ENCODE measurements at regions of chr11 and their contacts with region 1.

Region 1: DNA sequence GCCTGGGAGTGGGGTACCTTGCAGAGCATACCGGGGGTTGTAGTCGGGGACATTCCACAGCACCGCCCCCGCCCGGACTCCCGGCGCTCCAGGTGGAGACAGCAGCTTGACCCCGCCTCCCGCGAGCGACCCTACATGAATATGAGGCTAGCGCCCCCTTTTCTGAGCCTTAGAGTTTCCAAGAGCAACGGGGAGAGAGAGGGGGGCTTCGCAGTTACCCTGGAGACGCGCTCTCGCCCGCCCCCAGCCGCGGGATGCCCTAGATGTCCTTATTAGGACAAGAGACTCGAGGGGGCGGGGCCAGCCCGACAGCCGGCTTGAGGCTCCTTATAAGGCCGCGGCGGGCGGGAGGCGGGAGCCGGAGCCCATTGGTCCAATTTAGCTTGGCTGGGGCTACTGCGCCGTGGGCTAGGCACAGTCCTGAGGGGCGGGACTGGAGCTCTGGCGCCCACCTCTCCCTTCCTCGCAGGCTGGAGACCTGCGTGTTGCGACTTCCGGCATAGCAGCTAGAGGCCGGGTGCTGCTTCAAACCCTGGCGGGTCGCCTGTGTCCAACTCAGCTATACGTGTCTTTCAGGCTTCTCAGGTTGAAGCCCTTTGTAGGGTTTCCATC is 927 bp upstream of the MUS81 start:
- DNase-seq: peak; percentile 99 to 100
- H3K4me3 ChIP-seq: peak overlapping the region; percentile 84 to 99
- H3K27ac ChIP-seq: peak overlapping the region; percentile 94 to 99
- H3K4me1 ChIP-seq: peaks cover 21 to 27% of the 10 kb centered on the region in 2 donors
- H3K27me3 ChIP-seq: no peaks in the 10 kb centered on the region
- CTCF ChIP-seq: peak in 1 of 3 experiments; percentile 16

Region 2: GRCh38 chr11:65418711-65419459 is 440.4 kb before region 1 on chr11:
- intact Hi-C with region 1: loop called (anchors 5 kb)
- DNase-seq: peak; percentile 94 to 98
- H3K4me3 ChIP-seq: peak overlapping the region; percentile 56 to 80
- H3K27ac ChIP-seq: peak overlapping the region; percentile 97 to 99
- H3K4me1 ChIP-seq: peaks cover 32 to 46% of the 10 kb centered on the region in 2 donors
- H3K27me3 ChIP-seq: no peaks in the 10 kb centered on the region
- CTCF ChIP-seq: no peak

Region 3: GRCh38 chr11:65662799-65663638 is 196.3 kb before region 1 on chr11 and contains the start of gene RELA:
- intact Hi-C with region 1: loop called (anchors 1 kb)
- DNase-seq: peak; percentile 83 to 97
- H3K4me3 ChIP-seq: peak within 1 kb of the TSS; percentile 95 to 99
- H3K27ac ChIP-seq: peak within 1 kb of the TSS; percentile 98
- H3K4me1 ChIP-seq: peaks cover 11 to 32% of the 10 kb centered on the region in 2 donors
- H3K27me3 ChIP-seq: no peaks in the 10 kb centered on the region
- CTCF ChIP-seq: peak in 1 of 3 experiments; percentile 20
- total RNA-seq, gene RELA: 115 TPM

Region 4: DNA sequence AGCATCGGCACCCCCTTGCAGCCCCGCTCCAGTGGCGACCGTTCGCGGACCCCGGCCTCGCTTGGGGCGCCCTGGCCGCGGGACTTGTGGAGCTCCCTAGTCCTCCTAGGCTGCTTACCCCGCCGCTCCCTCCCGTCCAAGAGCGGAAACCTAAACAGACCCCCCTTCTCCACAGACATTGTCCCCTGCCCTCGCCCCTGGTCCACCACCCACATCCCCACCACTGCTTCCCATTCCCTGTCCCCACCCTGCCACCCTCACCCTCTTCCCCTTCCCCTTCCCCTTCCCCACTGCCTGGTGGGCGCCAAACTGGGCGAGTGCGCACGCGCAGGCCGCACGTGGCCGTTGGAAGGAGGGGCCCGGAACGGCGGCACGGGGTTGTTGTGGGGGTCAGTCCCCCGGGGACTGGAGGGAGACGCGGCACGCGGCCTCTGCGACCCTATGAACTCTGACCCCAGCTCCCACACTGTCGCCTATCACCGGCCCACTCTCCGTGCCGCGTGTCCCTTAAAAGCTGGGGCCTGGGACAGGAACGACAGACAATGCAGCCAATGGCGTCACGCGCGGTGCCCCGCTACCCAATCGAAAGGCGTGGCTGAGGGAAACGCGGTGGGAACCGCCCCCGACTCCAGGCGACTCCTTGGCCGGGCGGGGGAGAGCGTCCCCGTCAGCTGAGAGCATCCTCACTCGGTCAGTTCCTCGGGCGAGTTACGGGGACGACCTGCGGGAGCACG is 25.8 kb before region 1 on chr11 and contains the start of gene SNX32:
- intact Hi-C with region 1: loop called (anchors 2 kb)
- DNase-seq: peak; percentile 80 to 97
- H3K4me3 ChIP-seq: peak within 1 kb of the TSS; percentile 70 to 74
- H3K27ac ChIP-seq: no peak within 1 kb of the TSS
- H3K4me1 ChIP-seq: peaks cover 5 to 14% of the 10 kb centered on the region in 2 donors
- H3K27me3 ChIP-seq: no peaks in the 10 kb centered on the region
- CTCF ChIP-seq: no peak
- total RNA-seq, gene SNX32: not detected

Region 5: GRCh38 chr11:65888163-65888814 is 29.0 kb after region 1 on chr11 and contains the start of gene FIBP:
- intact Hi-C with region 1: loop called (anchors 1 kb)
- DNase-seq: peak; percentile 90 to 99
- H3K4me3 ChIP-seq: peak within 1 kb of the TSS; percentile 82 to 85
- H3K27ac ChIP-seq: peak within 1 kb of the TSS; percentile 98
- H3K4me1 ChIP-seq: peaks cover 20 to 28% of the 10 kb centered on the region in 2 donors
- H3K27me3 ChIP-seq: no peaks in the 10 kb centered on the region
- CTCF ChIP-seq: peak; percentile 84 to 98 (median 96)
- total RNA-seq, gene FIBP: 57.2 TPM

Region 6: DNA sequence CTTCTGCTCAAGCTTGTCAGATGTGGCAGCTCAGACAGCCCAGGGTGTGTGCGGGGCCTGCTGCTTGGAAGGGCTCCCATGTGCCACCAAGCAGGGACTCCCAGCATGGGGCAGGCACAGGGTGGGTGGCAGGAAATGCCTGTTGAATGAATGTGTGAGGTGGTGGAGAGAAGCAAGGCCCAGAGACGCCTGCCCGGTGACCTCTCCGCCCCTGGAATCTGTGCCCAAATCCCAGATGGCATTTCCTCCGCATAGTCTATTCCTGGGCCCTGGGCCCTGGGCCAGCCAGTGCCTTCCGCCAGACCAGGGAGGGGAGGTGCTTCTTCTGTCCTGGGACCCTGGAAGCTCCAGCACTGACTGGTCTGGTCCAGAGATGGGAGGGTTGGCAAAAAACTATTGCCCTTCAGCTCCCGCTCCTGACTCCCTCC is 156.2 kb after region 1 on chr11:
- intact Hi-C with region 1: loop called (anchors 1 kb)
- DNase-seq: peak; percentile 72 to 96
- H3K4me3 ChIP-seq: peak overlapping the region in 1 of 2 donors; percentile 40
- H3K27ac ChIP-seq: peak overlapping the region; percentile 94 to 95
- H3K4me1 ChIP-seq: peaks cover 27 to 58% of the 10 kb centered on the region in 2 donors
- H3K27me3 ChIP-seq: no peaks in the 10 kb centered on the region
- CTCF ChIP-seq: no peak